ENCODE measurements at regions of chr7 and their contacts with region 1.

Region 1: DNA sequence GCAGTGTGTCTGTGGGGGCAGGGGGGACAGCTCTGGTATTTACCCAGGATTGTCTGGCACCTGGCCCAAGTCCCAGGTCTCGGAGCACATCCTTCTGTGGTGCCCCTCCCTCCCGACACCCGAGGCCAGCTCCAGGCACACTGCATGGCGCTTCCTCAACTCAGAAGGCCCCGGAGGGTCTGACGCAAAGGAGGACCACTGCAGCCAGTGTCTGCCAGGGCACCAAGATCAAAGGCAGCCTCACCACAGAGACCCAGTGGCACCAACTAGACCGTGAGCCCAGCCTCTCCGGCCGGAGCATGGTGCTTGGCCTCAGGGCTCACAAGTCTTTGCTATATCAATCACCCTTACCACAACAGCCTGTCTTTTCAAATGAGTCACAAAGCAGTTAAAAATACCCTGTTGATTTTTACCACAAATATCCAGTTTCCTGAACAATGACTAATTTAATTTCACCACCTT is 99.3 kb upstream of the DDC start:
- DNase-seq: peak; percentile 60
- H3K4me3 Mint-ChIP-seq: no peak overlapping the region
- H3K27ac Mint-ChIP-seq: no peak overlapping the region
- H3K4me1 Mint-ChIP-seq: peaks cover 66% of the 10 kb centered on the region
- H3K27me3 Mint-ChIP-seq: peaks cover 2% of the 10 kb centered on the region

Region 2: GRCh38 chr7:50147951-50148808 is 516.3 kb before region 1 on chr7:
- CTCF ChIA-PET with region 1: no interaction called
- POLR2A ChIA-PET with region 1: no interaction called
- intact Hi-C with region 1: loop called (anchors 5 kb)
- DNase-seq: peak; percentile 41
- H3K4me3 Mint-ChIP-seq: peak overlapping the region; percentile 16
- H3K27ac Mint-ChIP-seq: peak overlapping the region; percentile 54
- H3K4me1 Mint-ChIP-seq: peaks cover 70% of the 10 kb centered on the region
- H3K27me3 Mint-ChIP-seq: no peaks in the 10 kb centered on the region

Region 3: GRCh38 chr7:50397320-50397970 is 267.0 kb before region 1 on chr7:
- CTCF ChIA-PET with region 1: no interaction called
- POLR2A ChIA-PET with region 1: no interaction called
- intact Hi-C with region 1: loop called (anchors 5 kb)
- DNase-seq: peak; percentile 50
- H3K4me3 Mint-ChIP-seq: peak overlapping the region; percentile 20
- H3K27ac Mint-ChIP-seq: peak overlapping the region; percentile 84
- H3K4me1 Mint-ChIP-seq: peaks cover 79% of the 10 kb centered on the region
- H3K27me3 Mint-ChIP-seq: no peaks in the 10 kb centered on the region

Region 4: GRCh38 chr7:50409856-50410745 is 254.4 kb before region 1 on chr7:
- CTCF ChIA-PET with region 1: no interaction called
- POLR2A ChIA-PET with region 1: no interaction called
- intact Hi-C with region 1: no loop called
- DNase-seq: no peak
- H3K4me3 Mint-ChIP-seq: no peak overlapping the region
- H3K27ac Mint-ChIP-seq: no peak overlapping the region
- H3K4me1 Mint-ChIP-seq: peaks cover 44% of the 10 kb centered on the region
- H3K27me3 Mint-ChIP-seq: no peaks in the 10 kb centered on the region

Region 5: DNA sequence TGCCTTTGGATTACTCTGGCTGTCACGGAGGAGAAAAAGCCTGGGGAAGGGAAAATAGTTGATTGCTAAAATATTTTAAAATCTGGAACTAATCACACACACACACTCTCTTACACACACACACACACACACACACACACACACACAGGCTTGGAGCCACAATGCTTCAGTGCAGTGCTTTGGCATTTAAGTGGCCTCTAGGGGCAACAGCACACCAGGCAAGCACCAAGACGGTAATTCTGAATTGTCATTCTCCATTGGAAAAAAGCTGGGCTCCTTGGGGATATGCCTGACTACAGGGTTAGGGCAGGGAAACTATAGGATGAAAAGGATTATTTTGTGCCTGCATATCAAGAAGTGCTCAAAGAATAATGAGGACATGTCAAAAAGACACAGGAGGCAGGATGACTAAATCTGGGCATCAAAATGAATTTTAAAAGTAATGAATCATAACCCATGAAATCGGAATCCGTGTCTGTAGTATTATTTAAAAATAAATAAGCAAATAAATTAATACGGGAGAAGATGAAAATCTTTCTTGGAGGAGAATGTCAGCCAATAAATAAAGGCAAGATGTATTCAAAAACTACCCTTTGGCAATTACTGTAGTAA is 68.9 kb before region 1 on chr7:
- CTCF ChIA-PET with region 1: no interaction called
- POLR2A ChIA-PET with region 1: no interaction called
- intact Hi-C with region 1: loop called (anchors 1 kb)
- DNase-seq: peak; percentile 24
- H3K4me3 Mint-ChIP-seq: no peak overlapping the region
- H3K27ac Mint-ChIP-seq: no peak overlapping the region
- H3K4me1 Mint-ChIP-seq: peaks cover 21% of the 10 kb centered on the region
- H3K27me3 Mint-ChIP-seq: peaks cover 6% of the 10 kb centered on the region

Region 6: DNA sequence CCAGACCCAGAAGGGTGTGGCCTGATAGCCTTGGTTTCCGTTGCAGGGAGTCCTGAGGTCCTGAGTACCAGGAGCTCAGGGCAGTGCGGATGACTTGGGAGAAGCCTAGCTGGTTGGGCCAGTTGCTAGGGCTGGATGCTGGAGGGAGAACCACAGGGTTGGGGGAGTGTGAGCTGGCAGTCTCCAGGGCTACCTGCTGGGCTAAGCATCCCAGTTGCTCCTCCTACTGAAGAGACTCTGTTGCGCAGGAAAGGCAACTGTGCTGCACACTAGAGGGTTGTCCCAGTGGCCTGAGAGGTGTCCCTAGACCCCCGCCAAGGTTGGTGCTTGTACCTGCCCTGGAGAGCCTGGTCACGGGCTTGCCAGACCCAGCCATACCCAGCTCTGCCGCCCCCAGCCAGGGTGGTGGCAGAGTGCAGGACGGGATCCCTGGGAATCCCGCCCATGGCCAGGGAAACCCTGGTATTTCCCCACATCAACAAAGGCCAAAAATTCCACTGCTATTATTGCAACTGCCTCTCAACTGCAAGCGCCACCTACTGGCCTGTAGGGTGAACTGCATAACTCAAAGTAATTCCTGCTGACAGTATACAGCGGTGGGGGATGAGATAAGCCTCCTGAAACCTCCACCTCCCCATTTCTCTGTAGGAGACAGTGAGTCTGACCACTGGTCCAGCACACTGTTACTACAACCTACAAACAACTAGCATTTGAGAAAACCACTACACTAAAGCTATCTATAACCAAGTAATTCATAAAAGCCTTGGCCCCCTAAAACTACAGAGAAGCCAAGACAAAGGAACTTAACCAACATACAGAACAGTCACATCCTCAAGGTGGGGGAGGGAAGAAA is 31.7 kb before region 1 on chr7:
- CTCF ChIA-PET with region 1: interaction called, 5 read pairs
- POLR2A ChIA-PET with region 1: no interaction called
- intact Hi-C with region 1: loop called (anchors 2 kb)
- DNase-seq: peak; percentile 65
- H3K4me3 Mint-ChIP-seq: no peak overlapping the region
- H3K27ac Mint-ChIP-seq: no peak overlapping the region
- H3K4me1 Mint-ChIP-seq: peaks cover 7% of the 10 kb centered on the region
- H3K27me3 Mint-ChIP-seq: peaks cover 2% of the 10 kb centered on the region

Region 7: DNA sequence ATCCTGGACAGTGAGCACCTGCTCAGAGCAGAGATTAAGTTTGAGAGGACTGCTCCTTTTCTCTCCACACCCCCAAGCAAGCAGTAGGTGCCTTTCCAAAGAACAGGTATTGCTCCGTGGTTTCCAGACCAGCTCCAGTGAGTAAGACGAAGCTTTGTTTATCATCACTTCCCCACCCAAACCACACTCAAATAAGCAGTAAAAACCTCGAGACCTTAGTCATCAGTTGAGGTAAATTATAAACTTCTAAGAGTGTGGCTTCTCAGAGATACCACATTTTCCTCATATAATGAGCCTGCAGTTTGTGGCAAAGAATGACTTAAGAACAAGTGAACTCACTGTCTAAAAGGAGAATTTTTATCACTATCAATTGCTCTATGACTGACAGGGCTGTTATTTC is 168.3 kb after region 1 on chr7:
- CTCF ChIA-PET with region 1: no interaction called
- POLR2A ChIA-PET with region 1: no interaction called
- intact Hi-C with region 1: loop called (anchors 2 kb)
- DNase-seq: peak; percentile 51
- H3K4me3 Mint-ChIP-seq: no peak overlapping the region
- H3K27ac Mint-ChIP-seq: no peak overlapping the region
- H3K4me1 Mint-ChIP-seq: peaks cover 17% of the 10 kb centered on the region
- H3K27me3 Mint-ChIP-seq: peaks cover 33% of the 10 kb centered on the region